ENCODE measurements at regions of chr1 and their contacts with region 1.

Region 1: GRCh38 chr1:1906185-1907097 is 8.6 kb upstream of the CALML6 start:
- DNase-seq: peak; percentile 39 to 80 (median 60)
- ATAC-seq: peak; percentile 18 to 27
- H3K4me3 Mint-ChIP-seq: peak overlapping the region; percentile 43 to 77 (median 58)
- H3K27ac Mint-ChIP-seq: peak overlapping the region; percentile 13 to 89 (median 54)
- H3K4me1 Mint-ChIP-seq: peaks cover 16 to 21% (median 18%) of the 10 kb centered on the region in 4 donors
- H3K27me3 Mint-ChIP-seq: peaks cover 0 to 3% (median 0%) of the 10 kb centered on the region in 5 donors

Region 2: DNA sequence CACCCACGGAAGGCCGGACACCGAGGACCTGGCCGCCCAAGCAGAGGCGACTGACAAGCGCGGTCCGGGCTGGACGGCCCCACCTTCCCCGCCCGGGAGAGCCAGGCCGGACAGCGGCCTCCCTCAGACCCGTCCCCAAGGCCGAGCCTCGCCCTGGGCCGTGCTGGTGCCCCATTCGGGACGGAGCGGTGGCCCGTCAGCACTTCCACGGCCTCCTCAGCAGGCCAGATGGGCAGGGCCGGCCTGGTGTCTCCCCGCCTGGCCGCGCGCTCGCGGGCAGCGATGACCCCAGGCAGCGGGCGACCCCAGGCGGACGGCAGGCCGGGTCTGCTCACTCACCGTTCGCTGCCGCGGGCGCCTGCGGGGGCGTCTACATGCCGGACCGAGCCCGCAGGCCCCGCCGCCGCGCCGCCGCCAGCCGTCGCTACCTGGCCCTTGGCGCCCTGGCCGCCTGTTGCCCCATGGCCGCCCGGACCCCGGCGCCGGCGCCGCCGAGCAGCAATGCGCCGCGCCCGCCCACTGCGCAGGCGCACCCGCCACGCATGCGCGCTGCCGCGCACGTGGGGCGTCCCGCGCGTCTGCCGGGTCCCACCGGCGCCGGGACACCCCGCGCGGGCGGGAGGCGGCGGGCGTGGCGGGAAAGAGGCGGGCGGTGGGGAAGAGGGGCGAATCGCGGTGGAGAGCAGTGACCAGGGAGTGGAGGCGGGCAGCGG is 128.3 kb before region 1 on chr1 and contains the start of gene NADK:
- POLR2A ChIA-PET with region 1: interaction called, 22 read pairs
- DNase-seq: peak; percentile 51 to 87 (median 79)
- ATAC-seq: peak; percentile 59 to 63
- H3K4me3 Mint-ChIP-seq: peak within 1 kb of the TSS; percentile 76 to 93 (median 88)
- H3K27ac Mint-ChIP-seq: peak within 1 kb of the TSS; percentile 87 to 98 (median 95)
- H3K4me1 Mint-ChIP-seq: peaks cover 28 to 68% (median 63%) of the 10 kb centered on the region in 4 donors
- H3K27me3 Mint-ChIP-seq: no peaks in the 10 kb centered on the region
- polyA plus RNA-seq, gene NADK: 18.3 to 25.4 (median 19.7) TPM

Region 3: GRCh38 chr1:1890506-1891348 is 15.7 kb before region 1 on chr1 and contains the start of gene GNB1:
- POLR2A ChIA-PET with region 1: interaction called, 25 read pairs
- DNase-seq: peak; percentile 79 to 94 (median 89)
- ATAC-seq: peak; percentile 61 to 73
- H3K4me3 Mint-ChIP-seq: peak within 1 kb of the TSS; percentile 80 to 96 (median 93)
- H3K27ac Mint-ChIP-seq: peak within 1 kb of the TSS; percentile 89 to 99 (median 96)
- H3K4me1 Mint-ChIP-seq: peaks cover 31 to 72% (median 67%) of the 10 kb centered on the region in 4 donors
- H3K27me3 Mint-ChIP-seq: no peaks in the 10 kb centered on the region
- polyA plus RNA-seq, gene GNB1: 45.9 to 107 (median 105) TPM

Region 4: DNA sequence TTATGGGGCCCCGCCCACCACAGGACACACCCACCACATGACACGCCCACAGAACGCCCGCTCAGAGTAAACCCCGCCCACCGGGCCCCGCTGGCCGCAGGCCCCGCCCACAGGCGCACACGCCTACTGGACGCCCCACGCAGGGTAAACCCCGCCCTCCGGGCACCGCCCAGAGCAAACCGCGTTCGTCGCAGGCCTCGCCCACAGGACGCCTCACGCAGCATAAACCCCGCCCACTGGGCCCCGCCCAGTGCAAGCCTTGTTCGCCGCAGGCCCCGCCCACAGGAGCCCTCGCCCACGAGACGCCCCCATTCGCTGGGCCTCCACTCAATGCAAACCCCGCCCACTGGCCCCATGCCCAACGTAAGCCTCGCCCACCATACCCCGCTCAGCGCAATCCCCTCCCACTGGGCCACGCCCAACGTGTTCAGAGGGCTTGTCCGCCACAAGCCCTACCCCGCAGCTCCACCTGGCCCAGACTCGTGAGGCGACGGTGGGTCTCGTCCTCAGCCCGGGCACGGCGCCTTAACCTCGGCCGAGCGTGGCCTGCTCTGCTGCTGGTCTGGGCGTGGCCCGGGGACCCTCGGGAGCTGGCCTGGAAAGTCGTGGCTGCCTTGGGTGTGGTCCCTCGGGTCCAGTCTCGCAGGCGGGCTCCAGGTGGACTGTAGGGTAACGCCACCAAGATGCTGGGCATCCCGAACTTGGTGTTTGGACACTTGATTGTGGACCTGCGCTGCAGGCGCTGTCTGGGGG is 13.0 kb after region 1 on chr1:
- POLR2A ChIA-PET with region 1: interaction called, 13 read pairs
- DNase-seq: peak; percentile 99 to 100 (median 100)
- ATAC-seq: peak; percentile 85 to 88
- H3K4me3 Mint-ChIP-seq: peak overlapping the region; percentile 48 to 80 (median 66)
- H3K27ac Mint-ChIP-seq: peak overlapping the region in 6 of 10 donors; percentile 19 to 87 (median 65)
- H3K4me1 Mint-ChIP-seq: peaks cover 0 to 12% (median 5%) of the 10 kb centered on the region in 4 donors
- H3K27me3 Mint-ChIP-seq: no peaks in the 10 kb centered on the region

Region 5: GRCh38 chr1:1929639-1930471 is 23.4 kb after region 1 on chr1:
- POLR2A ChIA-PET with region 1: no interaction called
- DNase-seq: no peak
- ATAC-seq: no peak
- H3K4me3 Mint-ChIP-seq: no peak overlapping the region
- H3K27ac Mint-ChIP-seq: no peak overlapping the region
- H3K4me1 Mint-ChIP-seq: no peaks in the 10 kb centered on the region
- H3K27me3 Mint-ChIP-seq: no peaks in the 10 kb centered on the region

Measured in naive thymus-derived CD8-positive, alpha-beta T cell (primary cell).